Left ventricle myocardium inferior (tissue), 1 donor: ENCODE measurements at regions of chr6 and their contacts with region 1.

Region 1: GRCh38 chr6:137799950-137800568 is 67.0 kb upstream of the TNFAIP3 start:
- DNase-seq: no peak
- H3K4me3 ChIP-seq: no peak overlapping the region
- H3K27ac ChIP-seq: no peak overlapping the region
- H3K4me1 ChIP-seq: peaks cover 8% of the 10 kb centered on the region
- H3K27me3 ChIP-seq: no peaks in the 10 kb centered on the region
- CTCF ChIP-seq: peak; percentile 65

Region 2: GRCh38 chr6:137866914-137867684 is 67.0 kb after region 1 on chr6 and contains the start of gene TNFAIP3:
- intact Hi-C with region 1: loop called (anchors 10 kb)
- DNase-seq: peak; percentile 93
- H3K4me3 ChIP-seq: peak within 1 kb of the TSS; percentile 100
- H3K27ac ChIP-seq: peak within 1 kb of the TSS; percentile 93
- H3K4me1 ChIP-seq: peaks cover 60% of the 10 kb centered on the region
- H3K27me3 ChIP-seq: no peaks in the 10 kb centered on the region
- CTCF ChIP-seq: peak; percentile 93
- total RNA-seq, gene TNFAIP3: 7.0 TPM